ENCODE measurements at regions of chr5 and their contacts with region 1.

Region 1: DNA sequence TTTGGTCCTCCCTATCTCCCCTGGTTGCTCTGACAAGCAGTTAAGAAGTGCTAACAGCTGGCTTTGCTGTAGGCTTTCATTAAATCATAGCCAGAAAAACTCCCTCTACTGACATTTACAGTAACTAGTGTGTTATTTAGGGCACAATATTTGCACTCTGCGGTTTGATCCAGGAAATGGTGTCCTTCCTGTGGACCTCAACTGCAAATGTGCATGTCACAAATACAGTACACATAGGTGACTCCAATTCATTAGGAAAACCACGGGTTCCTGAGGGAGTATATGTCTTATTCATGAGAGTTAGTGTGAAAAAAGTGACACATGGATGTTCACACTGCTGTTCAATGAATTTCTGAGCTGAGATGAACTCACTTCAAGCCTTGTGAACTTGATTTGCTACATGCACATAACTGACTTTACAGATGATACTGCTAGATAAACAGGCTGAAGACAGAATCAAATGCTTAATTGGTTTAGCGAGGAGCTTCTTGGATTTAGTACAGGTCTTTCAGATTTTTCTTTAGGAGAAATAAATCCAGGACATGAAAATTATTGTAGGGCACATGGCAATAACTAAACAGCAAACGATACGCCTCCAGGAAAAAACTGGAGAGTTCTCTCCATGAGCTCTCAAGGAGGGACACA is 281.5 kb downstream of the EFNA5 start:
- DNase-seq: peak; percentile 25
- CTCF ChIP-seq: no peak

Region 2: DNA sequence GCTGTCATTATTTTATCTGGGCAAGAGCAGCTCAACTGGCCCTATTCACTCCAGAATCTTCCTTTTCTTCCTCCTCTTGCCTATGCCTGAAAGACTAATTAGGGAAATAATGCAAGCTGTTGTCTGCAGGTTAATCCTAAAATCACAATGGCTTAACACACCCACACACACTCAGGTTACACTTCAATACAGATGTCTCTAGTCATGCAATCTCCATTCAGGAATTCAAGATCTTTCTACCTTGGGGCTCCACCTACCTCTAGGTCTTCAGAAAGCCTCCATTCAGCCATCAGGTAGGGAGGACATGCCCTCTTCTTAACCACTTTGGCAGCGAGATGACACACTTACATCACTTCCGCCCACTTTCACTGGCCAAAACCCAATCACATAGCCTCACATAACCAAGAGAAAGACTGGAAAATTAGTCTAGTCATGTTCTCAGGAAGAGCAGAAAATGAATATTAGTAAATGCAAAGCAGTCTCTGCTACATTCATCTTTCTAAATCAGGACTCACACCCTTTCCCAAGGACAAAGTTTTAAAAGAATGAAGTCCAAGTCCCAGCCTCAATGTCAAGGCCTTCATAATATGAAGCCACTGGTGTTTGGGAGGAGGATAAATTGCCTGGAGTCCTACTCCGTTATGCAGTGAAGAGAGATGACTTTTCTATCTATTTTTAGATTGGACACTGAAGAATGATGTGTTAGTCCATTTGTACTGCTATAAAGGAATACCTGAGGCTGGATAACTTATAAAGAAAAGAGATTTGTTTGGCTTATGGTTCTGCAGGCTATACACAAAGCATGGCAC is 146.6 kb before region 1 on chr5:
- in situ Hi-C with region 1: no loop called
- DNase-seq: no peak
- CTCF ChIP-seq: no peak

Region 3: GRCh38 chr5:107571621-107572536 is 182.6 kb after region 1 on chr5:
- in situ Hi-C with region 1: loop called (anchors 25 kb)
- DNase-seq: peak; percentile 55
- CTCF ChIP-seq: peak; percentile 95

Region 4: GRCh38 chr5:107726896-107727295 is 337.6 kb after region 1 on chr5:
- in situ Hi-C with region 1: no loop called
- DNase-seq: no peak
- CTCF ChIP-seq: no peak